ENCODE measurements at regions of chr12 and their contacts with region 1.

Region 1: DNA sequence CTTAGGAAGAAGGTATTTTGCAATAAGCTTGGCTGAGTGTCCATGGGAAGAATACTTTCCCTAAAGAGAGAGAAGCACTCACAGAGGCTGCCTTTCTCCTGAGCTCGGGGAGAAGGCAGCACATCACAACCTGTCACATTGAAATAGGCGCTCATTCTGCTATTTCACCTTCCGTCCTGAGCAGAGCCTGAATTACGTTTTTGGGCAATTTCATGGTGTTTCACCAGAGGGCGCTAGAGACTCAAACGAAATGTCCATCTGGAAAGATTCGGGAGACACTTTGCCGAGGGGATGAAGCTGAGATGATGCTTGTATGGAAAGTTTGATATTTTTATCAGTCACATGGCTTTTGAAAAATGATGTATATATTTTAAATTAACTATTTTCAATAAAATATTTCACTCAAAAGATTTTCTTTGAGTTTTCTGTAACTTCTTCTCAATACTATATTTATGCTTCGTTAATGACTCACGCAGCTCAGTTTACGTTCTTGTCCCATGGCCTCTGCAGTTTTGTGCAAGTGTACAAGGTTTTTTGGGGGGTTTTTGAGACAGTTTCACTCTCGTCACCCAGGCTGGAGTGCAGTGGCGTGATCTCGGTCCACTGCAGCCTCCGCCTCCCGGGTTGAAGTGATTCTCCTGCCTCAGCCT is 17.4 kb upstream of the B4GALNT3 start:
- DNase-seq: peak; percentile 34
- CTCF ChIP-seq: peak; percentile 61

Region 2: DNA sequence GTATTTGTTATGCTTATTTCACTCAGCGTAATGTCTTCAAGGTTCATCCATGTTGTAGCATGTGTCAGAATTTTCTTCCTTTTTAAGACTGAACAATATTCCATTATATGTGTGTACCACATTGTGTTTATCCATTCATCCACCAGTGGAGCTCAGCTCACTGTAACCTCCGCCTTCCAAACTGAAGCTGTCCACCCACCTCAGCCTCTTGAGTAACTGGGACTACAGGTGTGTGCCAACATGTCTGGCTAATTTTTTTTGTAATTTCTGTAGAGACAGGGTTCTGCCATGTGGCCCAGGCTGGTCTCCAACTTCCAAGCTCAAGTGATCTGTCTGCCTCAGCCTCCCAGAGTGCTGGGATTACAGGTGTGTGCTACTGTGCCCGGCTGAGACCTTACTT is 19.8 kb before region 1 on chr12:
- CTCF ChIA-PET with region 1: interaction called, 32 read pairs
- POLR2A ChIA-PET with region 1: no interaction called
- DNase-seq: no peak
- CTCF ChIP-seq: no peak

Measured in GM10248 (cell line).